Activated CD4-positive, alpha-beta T cell treated with anti-CD3 and anti-CD28 coated beads for 36 hours (primary cell): ENCODE measurements at regions of chr3 and their contacts with region 1.

Region 1: DNA sequence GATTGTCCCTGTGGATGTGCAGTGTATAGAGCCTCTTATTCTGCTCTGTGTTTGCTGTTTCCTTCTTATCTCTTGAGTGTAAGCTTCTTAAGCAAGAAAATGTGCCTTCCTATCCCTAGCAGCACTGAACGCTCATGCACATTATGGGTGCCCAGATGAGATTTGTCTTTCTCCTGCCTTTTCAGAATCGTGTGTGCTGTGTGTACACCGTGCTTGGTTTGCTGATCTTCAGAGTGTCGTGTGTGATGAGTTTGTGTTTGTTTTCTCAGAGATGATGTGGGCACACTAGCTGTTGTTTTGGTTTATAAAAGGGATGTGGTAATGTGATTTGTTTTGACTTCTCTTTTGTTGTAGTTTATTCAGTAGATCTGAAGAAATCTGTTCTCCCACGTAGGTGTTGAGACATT is 19.7 kb downstream of the GPR171 start:
- DNase-seq: no peak
- ATAC-seq: peak; percentile 59
- H3K4me3 Mint-ChIP-seq: peak overlapping the region; percentile 63
- H3K27ac Mint-ChIP-seq: peak overlapping the region; percentile 87
- H3K4me1 Mint-ChIP-seq: peaks cover 42% of the 10 kb centered on the region
- H3K27me3 Mint-ChIP-seq: no peaks in the 10 kb centered on the region

Region 2: GRCh38 chr3:150899141-150899540 is 284.1 kb before region 1 on chr3:
- CTCF ChIA-PET with region 1: no interaction called
- POLR2A ChIA-PET with region 1: no interaction called
- intact Hi-C with region 1: no loop called
- DNase-seq: no peak
- ATAC-seq: no peak
- H3K4me3 Mint-ChIP-seq: no peak overlapping the region
- H3K27ac Mint-ChIP-seq: no peak overlapping the region
- H3K4me1 Mint-ChIP-seq: no peaks in the 10 kb centered on the region
- H3K27me3 Mint-ChIP-seq: peaks cover 4% of the 10 kb centered on the region

Region 3: GRCh38 chr3:152211699-152212101 is 1028.4 kb after region 1 on chr3:
- CTCF ChIA-PET with region 1: no interaction called
- POLR2A ChIA-PET with region 1: interaction called, 10 read pairs
- intact Hi-C with region 1: no loop called
- DNase-seq: no peak
- ATAC-seq: no peak
- H3K4me3 Mint-ChIP-seq: no peak overlapping the region
- H3K27ac Mint-ChIP-seq: peak overlapping the region; percentile 23
- H3K4me1 Mint-ChIP-seq: peaks cover 74% of the 10 kb centered on the region
- H3K27me3 Mint-ChIP-seq: no peaks in the 10 kb centered on the region